ENCODE measurements at regions of chr10 and their contacts with region 1.

Region 1: GRCh38 chr10:72215652-72216549 is at the starts of genes ANAPC16 and ASCC1:
- DNase-seq: peak; percentile 96
- H3K4me3 Mint-ChIP-seq: peak within 1 kb of the TSS; percentile 95
- H3K27ac Mint-ChIP-seq: peak within 1 kb of the TSS; percentile 98
- H3K4me1 Mint-ChIP-seq: peaks cover 53% of the 10 kb centered on the region
- H3K27me3 Mint-ChIP-seq: no peaks in the 10 kb centered on the region
- total RNA-seq, gene ANAPC16: 119 to 122 TPM
- total RNA-seq, gene ASCC1: 50.9 to 52.5 TPM

Region 2: DNA sequence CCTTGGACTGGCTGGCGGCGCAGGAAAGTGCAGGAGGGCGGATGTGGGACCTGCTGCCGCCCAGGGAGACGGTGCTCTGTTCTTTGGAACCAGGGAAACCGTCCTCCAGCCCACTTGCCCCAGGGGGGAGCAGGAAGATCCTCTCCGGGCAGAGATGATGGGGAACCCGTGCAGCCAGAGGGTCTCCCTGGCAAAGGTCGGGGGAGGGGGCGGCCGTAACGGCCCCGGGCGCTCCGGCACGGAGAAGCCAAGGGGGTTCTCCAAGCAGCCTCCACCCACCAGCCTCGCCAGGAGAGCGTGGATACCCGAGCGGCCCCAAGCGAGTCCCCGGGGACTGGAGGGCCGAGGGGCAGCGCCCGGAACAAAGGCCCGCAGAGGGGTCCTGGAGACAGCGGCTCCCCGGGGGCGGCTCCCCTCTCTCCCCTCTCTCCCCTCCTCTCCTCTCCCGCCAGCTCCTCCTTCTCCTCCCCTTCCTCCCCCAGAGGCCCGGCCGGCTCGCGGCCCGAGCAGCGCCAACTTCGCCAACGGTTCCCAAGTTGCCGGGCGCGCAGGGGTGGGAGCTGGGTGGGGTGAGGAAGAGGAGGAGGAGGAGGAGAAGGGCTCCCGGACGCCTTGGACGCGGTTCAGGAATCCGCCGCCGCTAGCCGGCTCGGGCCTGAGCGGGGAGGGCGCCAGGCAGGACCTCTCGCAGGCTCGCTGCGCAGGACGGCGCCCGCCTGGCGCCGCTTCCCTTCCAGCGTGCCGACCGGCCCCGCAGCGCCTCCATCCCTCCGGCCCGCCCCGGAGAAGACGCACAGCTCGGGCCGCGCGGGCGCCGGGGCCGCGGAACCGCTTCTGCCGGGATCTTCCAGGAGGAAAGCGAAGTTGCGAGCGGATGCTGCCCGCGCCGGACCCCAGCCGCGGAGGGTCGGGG is 251.9 kb before region 1 on chr10 and contains the start of gene CHST3:
- CTCF ChIA-PET with region 1: no interaction called
- POLR2A ChIA-PET with region 1: no interaction called
- intact Hi-C with region 1: no loop called
- DNase-seq: no peak
- H3K4me3 Mint-ChIP-seq: peak within 1 kb of the TSS; percentile 66
- H3K27ac Mint-ChIP-seq: no peak within 1 kb of the TSS
- H3K4me1 Mint-ChIP-seq: peaks cover 9% of the 10 kb centered on the region
- H3K27me3 Mint-ChIP-seq: peaks cover 54% of the 10 kb centered on the region
- total RNA-seq, gene CHST3: 0.19 to 0.31 TPM

Region 3: GRCh38 chr10:72088889-72089575 is 126.9 kb before region 1 on chr10:
- CTCF ChIA-PET with region 1: interaction called, 7 read pairs
- POLR2A ChIA-PET with region 1: interaction called, 10 read pairs
- intact Hi-C with region 1: loop called (anchors 1 kb)
- DNase-seq: peak; percentile 76
- H3K4me3 Mint-ChIP-seq: peak overlapping the region; percentile 100
- H3K27ac Mint-ChIP-seq: peak overlapping the region; percentile 99
- H3K4me1 Mint-ChIP-seq: peaks cover 46% of the 10 kb centered on the region
- H3K27me3 Mint-ChIP-seq: no peaks in the 10 kb centered on the region

Region 4: GRCh38 chr10:72162978-72163377 is 52.9 kb before region 1 on chr10:
- CTCF ChIA-PET with region 1: interaction called, 3 read pairs
- POLR2A ChIA-PET with region 1: no interaction called
- intact Hi-C with region 1: loop called (anchors 2 kb)
- DNase-seq: no peak
- H3K4me3 Mint-ChIP-seq: no peak overlapping the region
- H3K27ac Mint-ChIP-seq: peak overlapping the region; percentile 65
- H3K4me1 Mint-ChIP-seq: peaks cover 26% of the 10 kb centered on the region
- H3K27me3 Mint-ChIP-seq: no peaks in the 10 kb centered on the region

Region 5: GRCh38 chr10:72260588-72261322 is 44.9 kb after region 1 on chr10:
- CTCF ChIA-PET with region 1: interaction called, 6 read pairs
- POLR2A ChIA-PET with region 1: interaction called, 6 read pairs
- intact Hi-C with region 1: loop called (anchors 1 kb)
- DNase-seq: peak; percentile 95
- H3K4me3 Mint-ChIP-seq: peak overlapping the region; percentile 84
- H3K27ac Mint-ChIP-seq: peak overlapping the region; percentile 99
- H3K4me1 Mint-ChIP-seq: peaks cover 60% of the 10 kb centered on the region
- H3K27me3 Mint-ChIP-seq: peaks cover 2% of the 10 kb centered on the region

Region 6: DNA sequence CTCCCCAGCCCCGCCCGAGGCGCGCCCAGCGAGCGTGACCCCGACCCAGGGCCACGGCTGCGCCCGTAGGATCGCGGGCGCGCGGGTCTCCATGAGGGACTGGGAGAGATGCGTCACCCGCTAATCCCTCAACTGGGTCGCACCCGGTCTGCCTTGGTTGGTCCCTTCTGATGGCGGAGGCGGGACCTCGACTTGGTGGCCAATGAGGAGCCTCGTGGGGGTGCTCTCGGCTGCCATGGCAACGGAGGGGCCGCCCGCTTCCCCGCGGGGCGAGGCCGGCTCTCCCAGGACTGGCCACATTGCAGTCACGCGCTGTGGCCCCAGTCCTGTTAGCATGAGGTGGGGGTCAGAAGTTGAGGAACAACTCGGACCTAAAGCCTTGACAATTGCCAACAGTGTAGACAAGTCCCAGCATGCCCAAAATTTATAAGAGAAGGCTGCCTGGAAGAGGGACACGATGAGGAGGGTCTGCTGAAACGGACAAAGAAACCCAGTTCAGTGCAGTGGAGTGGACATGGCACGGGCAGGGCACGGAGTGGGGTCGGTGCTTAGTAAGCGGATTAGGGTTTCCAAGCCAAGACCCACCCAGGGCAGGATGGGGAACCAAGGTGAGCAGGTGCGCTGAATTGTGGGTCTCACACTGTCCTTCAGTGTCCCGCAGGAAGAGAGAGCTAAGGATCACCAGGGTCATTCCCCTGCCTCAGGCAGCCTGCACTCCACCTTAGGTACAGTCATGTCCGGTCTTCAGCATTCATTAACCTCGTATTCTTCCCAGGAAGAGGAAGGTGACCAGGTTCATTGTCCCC is 82.3 kb after region 1 on chr10:
- CTCF ChIA-PET with region 1: no interaction called
- POLR2A ChIA-PET with region 1: interaction called, 9 read pairs
- intact Hi-C with region 1: loop called (anchors 1 kb)
- DNase-seq: peak; percentile 98
- H3K4me3 Mint-ChIP-seq: peak overlapping the region; percentile 86
- H3K27ac Mint-ChIP-seq: peak overlapping the region; percentile 100
- H3K4me1 Mint-ChIP-seq: peaks cover 56% of the 10 kb centered on the region
- H3K27me3 Mint-ChIP-seq: peaks cover 3% of the 10 kb centered on the region